Activated CD4-positive, alpha-beta T cell treated with anti-CD3 and anti-CD28 coated beads for 36 hours (primary cell): ENCODE measurements at regions of chr3 and their contacts with region 1.

Region 1: DNA sequence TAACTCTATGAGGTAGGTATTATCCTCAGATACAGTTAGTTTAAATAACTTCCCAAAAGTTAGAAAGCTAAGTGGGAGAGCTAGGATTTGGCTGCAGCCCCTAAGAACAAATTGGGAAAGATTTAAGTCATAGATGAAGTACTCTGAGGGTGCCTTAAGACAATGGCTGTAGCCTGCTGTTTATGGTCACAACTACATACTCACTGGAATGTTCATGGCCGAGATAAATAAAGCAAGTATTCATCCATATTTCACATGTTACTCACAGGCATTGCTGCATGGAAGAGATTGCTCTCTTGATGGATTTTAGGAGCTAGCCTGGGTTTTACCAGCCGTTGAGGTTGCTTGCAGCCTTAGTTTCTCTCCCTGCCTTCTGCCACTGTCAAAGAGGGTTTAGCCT is 145.0 kb downstream of the CMSS1 start:
- DNase-seq: no peak
- ATAC-seq: no peak
- H3K4me3 Mint-ChIP-seq: no peak overlapping the region
- H3K27ac Mint-ChIP-seq: no peak overlapping the region
- H3K4me1 Mint-ChIP-seq: peaks cover 5% of the 10 kb centered on the region
- H3K27me3 Mint-ChIP-seq: no peaks in the 10 kb centered on the region

Region 2: GRCh38 chr3:99909714-99910494 is 52.8 kb before region 1 on chr3:
- CTCF ChIA-PET with region 1: no interaction called
- POLR2A ChIA-PET with region 1: no interaction called
- intact Hi-C with region 1: loop called in 1 of 2 experiments (anchors 5 kb)
- DNase-seq: no peak
- ATAC-seq: no peak
- H3K4me3 Mint-ChIP-seq: no peak overlapping the region
- H3K27ac Mint-ChIP-seq: no peak overlapping the region
- H3K4me1 Mint-ChIP-seq: peaks cover 3% of the 10 kb centered on the region
- H3K27me3 Mint-ChIP-seq: no peaks in the 10 kb centered on the region